CD4-positive, alpha-beta T cell (primary cell): ENCODE measurements at regions of chr5 and their contacts with region 1.

Region 1: GRCh38 chr5:80246001-80246758 is 9.7 kb downstream of the SERINC5 start:
- DNase-seq: peak in 1 of 14 experiments; percentile 36
- ATAC-seq: no peak
- H3K4me3 ChIP-seq: no peak overlapping the region
- H3K4me3 Mint-ChIP-seq: peak overlapping the region; percentile 26
- H3K27ac ChIP-seq: peak overlapping the region in 1 of 2 donors; percentile 49
- H3K27ac Mint-ChIP-seq: peak overlapping the region; percentile 81
- H3K4me1 ChIP-seq: peaks cover 60% of the 10 kb centered on the region
- H3K4me1 Mint-ChIP-seq: peaks cover 71% of the 10 kb centered on the region
- H3K27me3 ChIP-seq: no peaks in the 10 kb centered on the region
- H3K27me3 Mint-ChIP-seq: no peaks in the 10 kb centered on the region
- CTCF ChIP-seq: no peak

Region 2: DNA sequence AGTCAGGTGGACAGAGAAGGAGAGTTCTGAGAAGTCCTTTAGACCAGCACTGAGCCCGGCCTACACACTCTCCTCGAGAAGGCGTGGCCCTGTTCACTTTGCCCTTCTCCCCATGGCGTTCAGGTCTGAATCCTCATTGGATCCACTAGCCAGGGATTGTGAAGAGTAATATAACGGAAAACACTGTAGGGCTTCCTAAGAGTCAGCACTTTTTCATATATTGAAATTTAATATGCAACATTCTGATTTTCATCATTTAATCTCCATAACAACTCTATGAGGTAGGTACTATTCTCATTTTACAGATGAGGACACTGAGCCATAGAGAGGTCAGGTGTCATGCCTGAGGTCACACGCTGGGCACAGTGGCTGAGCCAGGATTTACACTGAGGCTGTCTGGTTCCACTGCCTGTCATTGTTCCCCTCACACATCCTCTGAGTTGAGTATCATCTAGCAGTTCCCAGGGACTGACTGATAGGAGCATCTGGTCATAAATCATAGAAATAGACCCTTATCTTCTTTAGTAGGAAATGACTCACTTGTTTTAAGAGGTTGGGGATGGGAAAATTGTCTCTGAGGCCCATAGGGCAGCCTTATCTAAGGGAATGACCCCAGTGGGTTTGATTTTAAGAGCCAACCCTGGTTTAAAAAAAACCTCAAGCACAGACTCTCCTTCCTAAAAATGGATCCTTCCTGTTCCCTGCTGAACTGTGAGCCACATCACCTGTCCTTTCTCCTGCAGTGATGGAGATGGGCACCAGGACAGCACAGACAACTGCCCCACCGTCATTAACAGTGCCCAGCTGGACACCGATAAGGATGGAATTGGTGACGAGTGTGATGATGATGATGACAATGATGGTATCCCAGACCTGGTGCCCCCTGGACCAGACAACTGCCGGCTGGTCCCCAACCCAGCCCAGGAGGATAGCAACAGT is 169.8 kb before region 1 on chr5:
- CTCF ChIA-PET with region 1: no interaction called
- POLR2A ChIA-PET with region 1: no interaction called
- intact Hi-C with region 1: no loop called
- DNase-seq: no peak
- ATAC-seq: no peak
- H3K4me3 ChIP-seq: no peak overlapping the region
- H3K4me3 Mint-ChIP-seq: no peak overlapping the region
- H3K27ac ChIP-seq: no peak overlapping the region
- H3K27ac Mint-ChIP-seq: no peak overlapping the region
- H3K4me1 ChIP-seq: no peaks in the 10 kb centered on the region
- H3K4me1 Mint-ChIP-seq: no peaks in the 10 kb centered on the region
- H3K27me3 ChIP-seq: no peaks in the 10 kb centered on the region
- H3K27me3 Mint-ChIP-seq: no peaks in the 10 kb centered on the region
- CTCF ChIP-seq: no peak

Region 3: DNA sequence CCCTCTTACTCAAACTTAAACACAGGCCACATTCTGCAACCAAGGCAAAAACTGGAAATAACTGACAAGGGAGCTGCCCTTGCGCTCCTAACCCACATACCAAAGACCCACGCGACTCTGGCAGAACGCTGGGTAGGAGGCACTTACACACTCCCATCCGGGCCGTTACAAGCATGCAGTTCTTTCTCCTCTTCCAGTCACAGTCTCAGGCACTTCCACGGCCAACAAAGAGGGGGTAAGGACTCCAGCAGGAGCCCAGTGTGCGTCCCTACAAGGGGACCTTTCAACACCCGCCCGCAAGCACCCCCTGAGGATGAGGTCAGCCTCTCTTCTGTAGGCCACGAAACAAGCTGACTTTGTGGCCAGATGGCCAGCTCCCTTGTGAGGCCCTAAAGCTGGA is 47.8 kb before region 1 on chr5:
- CTCF ChIA-PET with region 1: no interaction called
- POLR2A ChIA-PET with region 1: interaction called, 10 read pairs
- intact Hi-C with region 1: loop called (anchors 5 kb)
- DNase-seq: no peak
- ATAC-seq: no peak
- H3K4me3 ChIP-seq: no peak overlapping the region
- H3K4me3 Mint-ChIP-seq: no peak overlapping the region
- H3K27ac ChIP-seq: peak overlapping the region; percentile 14 to 53
- H3K27ac Mint-ChIP-seq: peak overlapping the region; percentile 64
- H3K4me1 ChIP-seq: peaks cover 65% of the 10 kb centered on the region
- H3K4me1 Mint-ChIP-seq: peaks cover 84% of the 10 kb centered on the region
- H3K27me3 ChIP-seq: no peaks in the 10 kb centered on the region
- H3K27me3 Mint-ChIP-seq: no peaks in the 10 kb centered on the region
- CTCF ChIP-seq: no peak

Region 4: GRCh38 chr5:82129723-82130285 is 1883.6 kb after region 1 on chr5:
- CTCF ChIA-PET with region 1: no interaction called
- POLR2A ChIA-PET with region 1: no interaction called
- intact Hi-C with region 1: no loop called
- DNase-seq: no peak
- ATAC-seq: no peak
- H3K4me3 ChIP-seq: no peak overlapping the region
- H3K4me3 Mint-ChIP-seq: no peak overlapping the region
- H3K27ac ChIP-seq: no peak overlapping the region
- H3K27ac Mint-ChIP-seq: no peak overlapping the region
- H3K4me1 ChIP-seq: no peaks in the 10 kb centered on the region
- H3K4me1 Mint-ChIP-seq: no peaks in the 10 kb centered on the region
- H3K27me3 ChIP-seq: no peaks in the 10 kb centered on the region
- H3K27me3 Mint-ChIP-seq: no peaks in the 10 kb centered on the region
- CTCF ChIP-seq: no peak